ENCODE measurements at regions of chr12 and their contacts with region 1.

Region 1: GRCh38 chr12:25320123-25321006 is 69.6 kb upstream of the KRAS start:
- DNase-seq: no peak
- H3K4me3 ChIP-seq: no peak overlapping the region
- H3K27ac ChIP-seq: no peak overlapping the region
- H3K4me1 ChIP-seq: no peaks in the 10 kb centered on the region
- H3K27me3 ChIP-seq: no peaks in the 10 kb centered on the region
- CTCF ChIP-seq: no peak

Region 2: GRCh38 chr12:24898185-24898584 is 422.2 kb before region 1 on chr12:
- intact Hi-C with region 1: no loop called
- DNase-seq: no peak
- H3K4me3 ChIP-seq: no peak overlapping the region
- H3K27ac ChIP-seq: no peak overlapping the region
- H3K4me1 ChIP-seq: no peaks in the 10 kb centered on the region
- H3K27me3 ChIP-seq: no peaks in the 10 kb centered on the region
- CTCF ChIP-seq: no peak

Region 3: GRCh38 chr12:25162866-25163265 is 157.5 kb before region 1 on chr12:
- intact Hi-C with region 1: no loop called
- DNase-seq: no peak
- H3K4me3 ChIP-seq: no peak overlapping the region
- H3K27ac ChIP-seq: no peak overlapping the region
- H3K4me1 ChIP-seq: no peaks in the 10 kb centered on the region
- H3K27me3 ChIP-seq: no peaks in the 10 kb centered on the region
- CTCF ChIP-seq: no peak

Region 4: GRCh38 chr12:25249931-25250738 is 70.2 kb before region 1 on chr12:
- intact Hi-C with region 1: loop called (anchors 10 kb)
- DNase-seq: peak; percentile 69
- H3K4me3 ChIP-seq: peak overlapping the region; percentile 87
- H3K27ac ChIP-seq: peak overlapping the region; percentile 92
- H3K4me1 ChIP-seq: peaks cover 4% of the 10 kb centered on the region
- H3K27me3 ChIP-seq: no peaks in the 10 kb centered on the region
- CTCF ChIP-seq: no peak

Region 5: DNA sequence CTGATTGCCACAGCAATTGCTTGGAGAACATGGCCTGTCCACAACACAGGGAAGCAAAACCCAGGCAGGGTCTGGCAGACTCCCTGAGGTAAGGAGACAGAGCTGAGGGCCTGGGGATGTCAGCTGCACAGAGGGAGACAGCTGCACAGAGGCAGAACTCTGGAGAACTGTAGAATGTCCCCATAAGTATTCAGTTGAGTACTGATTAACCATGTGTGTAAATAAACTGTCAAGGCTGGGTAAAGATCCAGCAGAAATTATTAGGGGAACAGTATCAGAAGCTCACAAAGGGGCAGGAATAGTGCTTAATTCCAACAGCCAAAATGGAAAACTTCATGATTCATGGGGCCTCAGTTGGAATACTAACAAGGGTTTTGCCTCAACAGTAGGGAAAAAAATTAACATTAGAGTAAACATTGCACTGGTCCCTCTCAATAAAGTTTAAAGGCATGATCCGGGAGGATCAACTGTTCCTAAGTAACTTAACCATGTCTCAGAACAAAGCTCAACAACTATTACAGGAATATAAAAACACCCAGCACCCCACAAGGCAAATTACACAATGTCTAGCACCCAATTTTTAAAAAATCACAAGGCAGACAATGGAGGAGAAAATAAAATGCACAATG is 436.8 kb after region 1 on chr12:
- intact Hi-C with region 1: no loop called
- DNase-seq: no peak
- H3K4me3 ChIP-seq: no peak overlapping the region
- H3K27ac ChIP-seq: no peak overlapping the region
- H3K4me1 ChIP-seq: no peaks in the 10 kb centered on the region
- H3K27me3 ChIP-seq: no peaks in the 10 kb centered on the region
- CTCF ChIP-seq: no peak

Measured in colonic mucosa (tissue), 4 donors.